OCI-LY7 (cell line): ENCODE measurements at regions of chr4 and their contacts with region 1.

Region 1: DNA sequence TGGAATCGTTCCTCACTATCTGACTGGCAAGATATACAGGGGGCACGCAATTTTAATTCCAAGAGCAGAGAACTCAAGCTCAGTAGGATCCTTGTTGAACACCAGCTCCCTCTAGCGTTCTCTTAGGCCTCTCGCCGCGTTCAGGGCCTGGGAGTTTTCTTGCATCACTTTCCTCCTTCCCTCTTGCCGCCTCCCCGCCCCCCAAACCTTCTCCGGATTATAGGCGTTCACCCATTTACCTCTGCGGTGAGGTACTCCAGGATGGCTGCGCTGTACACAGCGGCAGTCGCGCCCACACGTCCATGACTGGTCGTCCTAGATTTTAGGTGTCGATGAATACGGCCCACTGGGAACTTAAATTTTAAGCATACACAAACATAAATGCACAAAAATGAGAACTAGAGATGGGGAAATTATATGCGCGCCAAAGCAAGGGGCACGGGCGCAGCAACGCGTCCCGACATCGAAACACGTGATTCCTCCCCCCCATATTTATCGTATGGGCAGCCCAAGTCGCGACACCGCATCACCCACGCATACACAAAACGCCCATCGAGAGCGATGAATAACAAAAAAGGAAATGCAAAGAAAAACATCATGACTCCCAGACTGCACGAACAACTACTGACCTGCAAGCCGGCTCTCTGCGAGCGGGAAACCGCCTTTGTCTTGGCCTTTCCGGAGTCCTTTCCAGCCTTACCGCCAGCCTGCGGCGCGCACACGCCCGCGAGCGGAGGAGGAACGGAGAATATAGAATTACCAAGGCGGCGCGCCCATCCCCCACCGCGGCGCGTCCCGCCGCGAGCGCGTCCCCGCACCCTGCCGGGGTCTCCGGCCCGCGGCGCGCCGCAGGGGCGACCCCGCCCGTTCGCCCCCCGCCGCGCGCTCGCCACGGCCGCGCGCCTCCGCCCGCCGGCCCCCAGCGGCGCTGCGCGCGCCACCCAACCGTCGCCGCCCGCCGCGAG is 759 bp downstream of the H2AZ1 start:
- DNase-seq: peak; percentile 95
- H3K4me3 ChIP-seq: peak overlapping the region; percentile 98
- H3K27ac ChIP-seq: peak overlapping the region; percentile 95
- H3K4me1 ChIP-seq: peaks cover 26% of the 10 kb centered on the region
- CTCF ChIP-seq: peak; percentile 86

Region 2: GRCh38 chr4:98446499-98447375 is 1502.6 kb before region 1 on chr4:
- CTCF ChIA-PET with region 1: no interaction called
- POLR2A ChIA-PET with region 1: no interaction called
- intact Hi-C with region 1: loop called (anchors 5 kb)
- DNase-seq: peak; percentile 65
- H3K4me3 ChIP-seq: peak overlapping the region; percentile 0
- H3K27ac ChIP-seq: peak overlapping the region; percentile 41
- H3K4me1 ChIP-seq: peaks cover 29% of the 10 kb centered on the region
- CTCF ChIP-seq: no peak

Region 3: GRCh38 chr4:98928505-98929340 is 1020.6 kb before region 1 on chr4 and contains the start of gene EIF4E:
- CTCF ChIA-PET with region 1: no interaction called
- POLR2A ChIA-PET with region 1: no interaction called
- intact Hi-C with region 1: loop called (anchors 2 kb)
- DNase-seq: peak; percentile 99
- H3K4me3 ChIP-seq: peak within 1 kb of the TSS; percentile 88
- H3K27ac ChIP-seq: peak within 1 kb of the TSS; percentile 83
- H3K4me1 ChIP-seq: peaks cover 32% of the 10 kb centered on the region
- CTCF ChIP-seq: peak; percentile 45
- total RNA-seq, gene EIF4E: 136 and 152 TPM in 2 replicates

Region 4: DNA sequence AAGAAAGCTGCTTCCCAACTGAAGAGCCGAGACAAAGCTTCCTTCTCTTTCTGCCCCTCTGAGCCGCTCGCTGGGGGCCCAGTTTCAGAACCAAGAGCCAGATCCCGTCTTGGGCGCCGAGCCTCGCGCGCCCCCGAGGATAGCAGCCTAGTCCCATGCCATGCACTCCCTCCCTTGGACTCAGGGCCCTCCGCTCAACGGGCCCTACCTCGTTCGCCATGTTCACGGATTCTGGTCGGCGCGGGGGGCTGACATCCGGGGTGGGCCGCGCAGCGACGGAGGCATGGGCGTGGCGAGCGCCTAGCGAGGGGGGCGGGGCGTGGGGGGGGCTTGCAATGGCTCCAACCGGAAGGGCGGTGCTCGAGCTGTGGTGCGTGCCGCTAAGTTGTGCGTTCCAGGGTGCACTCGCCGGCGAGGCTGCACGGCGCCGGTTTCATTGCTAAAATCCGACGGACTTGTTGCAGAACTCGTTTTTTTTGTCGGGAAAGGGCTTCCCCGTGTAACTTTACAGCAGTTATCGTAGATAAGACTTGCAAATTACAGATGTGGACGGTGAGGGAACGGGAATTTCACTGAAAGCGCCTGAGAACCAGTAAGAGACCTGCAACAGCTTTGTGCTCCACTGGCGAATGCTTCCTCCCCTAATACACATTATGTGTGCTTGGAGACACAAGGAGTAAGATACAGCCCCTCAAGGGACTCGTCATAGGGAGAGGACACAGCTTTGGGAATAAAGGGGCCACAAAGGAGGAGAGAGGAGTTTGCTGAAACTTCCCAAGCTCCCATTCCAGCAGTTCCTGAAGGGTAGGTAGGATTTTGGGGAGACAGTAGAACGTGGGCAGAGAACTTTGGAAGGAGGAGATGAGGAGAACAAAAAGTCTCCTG is 860.6 kb before region 1 on chr4 and contains the start of gene ADH5:
- CTCF ChIA-PET with region 1: no interaction called
- POLR2A ChIA-PET with region 1: interaction called, 4 read pairs
- intact Hi-C with region 1: loop called (anchors 1 kb)
- DNase-seq: peak; percentile 93
- H3K4me3 ChIP-seq: peak within 1 kb of the TSS; percentile 75
- H3K27ac ChIP-seq: peak within 1 kb of the TSS; percentile 50
- H3K4me1 ChIP-seq: peaks cover 23% of the 10 kb centered on the region
- CTCF ChIP-seq: no peak
- total RNA-seq, gene ADH5: 50.0 and 62.6 TPM in 2 replicates

Region 5: DNA sequence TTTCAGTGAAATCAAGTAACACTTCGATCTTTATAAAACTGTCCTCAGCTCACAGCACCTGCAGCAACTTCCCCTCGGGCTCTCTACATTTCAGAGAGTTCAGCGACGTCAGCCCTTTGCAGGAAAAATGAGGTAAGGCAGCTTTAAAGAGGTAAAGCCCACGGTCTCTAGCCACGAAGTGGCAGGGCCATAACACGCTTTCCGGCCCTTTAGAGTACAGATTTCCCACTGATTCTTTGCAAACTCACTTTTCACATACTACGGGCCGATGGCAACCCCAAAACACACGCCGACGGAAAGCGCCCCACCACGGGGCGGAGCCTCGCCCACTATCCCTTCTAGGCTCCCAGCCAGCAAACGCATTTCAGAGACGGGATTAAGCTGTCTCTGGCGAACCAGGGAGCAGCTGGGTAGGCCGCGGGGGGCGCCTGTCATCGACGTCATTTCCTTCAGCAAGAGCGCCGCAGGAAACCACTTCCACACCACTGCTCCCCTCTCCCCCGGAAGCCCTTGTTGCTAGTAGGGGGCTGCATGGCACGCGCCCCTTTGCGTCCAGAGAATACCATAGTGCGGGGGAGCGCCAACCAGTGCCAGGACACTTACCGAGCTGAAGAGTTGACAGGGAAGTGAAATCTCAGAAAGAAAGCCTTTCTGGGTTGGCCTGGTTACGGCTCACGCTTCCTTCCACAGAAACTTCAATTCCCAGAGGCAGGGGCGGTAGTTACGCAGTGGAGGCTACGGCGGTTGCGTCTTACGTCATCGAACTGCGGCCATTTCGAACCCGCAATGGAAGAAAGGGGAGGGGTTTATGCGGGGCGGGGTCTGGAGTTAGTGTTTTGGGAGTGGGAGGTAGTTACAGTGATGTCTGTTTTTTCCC is 385.8 kb before region 1 on chr4 and contains the start of gene TRMT10A:
- CTCF ChIA-PET with region 1: no interaction called
- POLR2A ChIA-PET with region 1: interaction called, 14 read pairs
- intact Hi-C with region 1: loop called (anchors 1 kb)
- DNase-seq: peak; percentile 96
- H3K4me3 ChIP-seq: peak within 1 kb of the TSS; percentile 80
- H3K27ac ChIP-seq: peak within 1 kb of the TSS; percentile 78
- H3K4me1 ChIP-seq: peaks cover 12% of the 10 kb centered on the region
- CTCF ChIP-seq: no peak
- total RNA-seq, gene TRMT10A: 7.9 and 13.3 TPM in 2 replicates

Region 6: DNA sequence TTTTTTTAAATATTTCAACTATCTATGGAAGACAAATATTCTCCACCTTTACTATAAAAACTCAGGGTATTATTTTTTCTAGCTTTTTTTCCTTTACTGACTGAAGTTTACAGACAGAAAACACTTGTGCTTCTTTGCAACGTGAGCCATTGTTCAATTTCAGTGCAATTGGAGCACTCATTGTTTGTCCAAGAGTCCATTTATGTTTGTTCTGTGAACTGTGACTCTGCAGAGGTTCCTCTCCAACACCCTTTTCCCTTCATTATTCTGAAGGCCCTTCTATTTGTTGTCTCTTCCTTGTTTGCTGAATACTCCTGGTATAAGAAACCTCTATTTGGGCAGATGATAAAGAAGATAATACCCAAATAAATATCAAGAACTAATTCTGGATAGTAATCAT is 95.3 kb before region 1 on chr4:
- CTCF ChIA-PET with region 1: no interaction called
- POLR2A ChIA-PET with region 1: no interaction called
- intact Hi-C with region 1: no loop called
- DNase-seq: no peak
- H3K4me3 ChIP-seq: no peak overlapping the region
- H3K27ac ChIP-seq: no peak overlapping the region
- H3K4me1 ChIP-seq: peaks cover 33% of the 10 kb centered on the region
- CTCF ChIP-seq: no peak

Region 7: GRCh38 chr4:99894161-99894997 is 54.9 kb before region 1 on chr4 and contains the start of gene LAMTOR3:
- CTCF ChIA-PET with region 1: interaction called, 3 read pairs
- POLR2A ChIA-PET with region 1: interaction called, 5 read pairs
- intact Hi-C with region 1: loop called (anchors 1 kb)
- DNase-seq: peak; percentile 95
- H3K4me3 ChIP-seq: peak within 1 kb of the TSS; percentile 92
- H3K27ac ChIP-seq: peak within 1 kb of the TSS; percentile 57
- H3K4me1 ChIP-seq: peaks cover 8% of the 10 kb centered on the region
- CTCF ChIP-seq: no peak
- total RNA-seq, gene LAMTOR3: 11.9 and 18.5 TPM in 2 replicates

Region 8: GRCh38 chr4:101347557-101348366 is 1398.4 kb after region 1 on chr4:
- CTCF ChIA-PET with region 1: no interaction called
- POLR2A ChIA-PET with region 1: no interaction called
- intact Hi-C with region 1: loop called (anchors 5 kb)
- DNase-seq: peak; percentile 95
- H3K4me3 ChIP-seq: peak overlapping the region; percentile 75
- H3K27ac ChIP-seq: peak overlapping the region; percentile 73
- H3K4me1 ChIP-seq: peaks cover 20% of the 10 kb centered on the region
- CTCF ChIP-seq: peak; percentile 40